ENCODE measurements at regions of chr22 and their contacts with region 1.

Region 1: GRCh38 chr22:39003165-39003638 is 10.9 kb upstream of the APOBEC3C start:
- DNase-seq: peak; percentile 84
- ATAC-seq: peak; percentile 93
- H3K4me3 ChIP-seq: no peak overlapping the region
- H3K4me3 Mint-ChIP-seq: no peak overlapping the region
- H3K27ac ChIP-seq: no peak overlapping the region
- H3K27ac Mint-ChIP-seq: peak overlapping the region; percentile 27
- H3K4me1 ChIP-seq: peaks cover 7 to 12% of the 10 kb centered on the region in 2 donors
- H3K4me1 Mint-ChIP-seq: peaks cover 13% of the 10 kb centered on the region
- H3K27me3 ChIP-seq: no peaks in the 10 kb centered on the region
- H3K27me3 Mint-ChIP-seq: peaks cover 2% of the 10 kb centered on the region
- CTCF ChIP-seq: peak; percentile 80

Region 2: GRCh38 chr22:38901111-38901641 is 102.0 kb before region 1 on chr22:
- CTCF ChIA-PET with region 1: no interaction called
- POLR2A ChIA-PET with region 1: no interaction called
- intact Hi-C with region 1: no loop called
- DNase-seq: no peak
- ATAC-seq: no peak
- H3K4me3 ChIP-seq: no peak overlapping the region
- H3K4me3 Mint-ChIP-seq: peak overlapping the region; percentile 51
- H3K27ac ChIP-seq: no peak overlapping the region
- H3K27ac Mint-ChIP-seq: no peak overlapping the region
- H3K4me1 ChIP-seq: peaks cover 0 to 16% of the 10 kb centered on the region in 2 donors
- H3K4me1 Mint-ChIP-seq: peaks cover 14% of the 10 kb centered on the region
- H3K27me3 ChIP-seq: no peaks in the 10 kb centered on the region
- H3K27me3 Mint-ChIP-seq: peaks cover 6% of the 10 kb centered on the region
- CTCF ChIP-seq: no peak

Region 3: DNA sequence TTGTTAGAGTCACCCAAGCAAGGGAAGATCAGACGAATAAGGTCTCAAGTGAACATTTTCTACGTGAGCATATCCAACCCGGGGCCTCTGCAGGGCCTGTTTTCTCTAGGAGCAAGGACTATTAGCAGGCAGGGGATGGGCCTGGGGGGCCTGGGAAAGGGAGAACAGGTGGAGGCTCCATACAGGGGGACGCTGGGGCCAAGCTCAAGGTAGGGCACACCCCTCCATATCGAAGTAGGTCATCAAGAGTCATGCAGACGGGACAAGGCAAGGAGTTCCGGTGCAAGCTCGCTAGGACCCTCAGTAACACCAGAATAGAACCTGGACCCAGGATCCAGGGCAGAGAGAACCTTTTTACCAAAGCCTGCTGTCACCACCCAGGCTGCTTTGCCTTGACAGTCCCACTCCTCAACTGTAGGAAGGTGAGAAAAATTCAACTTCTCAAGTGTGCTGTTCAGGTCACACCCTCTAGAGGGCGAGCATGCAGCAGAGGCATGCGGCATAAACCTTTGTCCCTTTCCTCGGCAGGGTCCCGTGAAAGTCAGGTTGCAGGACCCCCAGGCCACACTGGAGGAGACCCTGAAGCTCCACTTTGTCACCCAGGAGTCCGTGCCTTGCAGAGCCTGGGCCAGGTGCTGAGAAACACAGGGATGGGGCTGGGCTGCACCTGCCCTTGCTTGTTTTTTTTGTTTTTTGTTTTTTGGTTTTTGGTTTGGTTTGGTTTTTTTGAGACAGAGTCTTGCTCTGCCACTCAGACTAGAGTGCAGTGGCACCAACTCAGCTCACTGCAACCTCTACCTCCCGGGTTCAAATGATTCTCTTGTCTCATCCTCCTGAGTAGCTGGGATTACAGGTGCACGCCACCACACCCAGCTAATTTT is 29.7 kb before region 1 on chr22:
- CTCF ChIA-PET with region 1: interaction called, 133 read pairs
- POLR2A ChIA-PET with region 1: no interaction called
- intact Hi-C with region 1: loop called (anchors 1 kb)
- DNase-seq: peak; percentile 71
- ATAC-seq: peak; percentile 89
- H3K4me3 ChIP-seq: no peak overlapping the region
- H3K4me3 Mint-ChIP-seq: no peak overlapping the region
- H3K27ac ChIP-seq: no peak overlapping the region
- H3K27ac Mint-ChIP-seq: no peak overlapping the region
- H3K4me1 ChIP-seq: peaks cover 0 to 8% of the 10 kb centered on the region in 2 donors
- H3K4me1 Mint-ChIP-seq: peaks cover 6% of the 10 kb centered on the region
- H3K27me3 ChIP-seq: peaks cover 0 to 20% (median 0%) of the 10 kb centered on the region in 4 experiments
- H3K27me3 Mint-ChIP-seq: peaks cover 24% of the 10 kb centered on the region
- CTCF ChIP-seq: peak; percentile 92

Region 4: DNA sequence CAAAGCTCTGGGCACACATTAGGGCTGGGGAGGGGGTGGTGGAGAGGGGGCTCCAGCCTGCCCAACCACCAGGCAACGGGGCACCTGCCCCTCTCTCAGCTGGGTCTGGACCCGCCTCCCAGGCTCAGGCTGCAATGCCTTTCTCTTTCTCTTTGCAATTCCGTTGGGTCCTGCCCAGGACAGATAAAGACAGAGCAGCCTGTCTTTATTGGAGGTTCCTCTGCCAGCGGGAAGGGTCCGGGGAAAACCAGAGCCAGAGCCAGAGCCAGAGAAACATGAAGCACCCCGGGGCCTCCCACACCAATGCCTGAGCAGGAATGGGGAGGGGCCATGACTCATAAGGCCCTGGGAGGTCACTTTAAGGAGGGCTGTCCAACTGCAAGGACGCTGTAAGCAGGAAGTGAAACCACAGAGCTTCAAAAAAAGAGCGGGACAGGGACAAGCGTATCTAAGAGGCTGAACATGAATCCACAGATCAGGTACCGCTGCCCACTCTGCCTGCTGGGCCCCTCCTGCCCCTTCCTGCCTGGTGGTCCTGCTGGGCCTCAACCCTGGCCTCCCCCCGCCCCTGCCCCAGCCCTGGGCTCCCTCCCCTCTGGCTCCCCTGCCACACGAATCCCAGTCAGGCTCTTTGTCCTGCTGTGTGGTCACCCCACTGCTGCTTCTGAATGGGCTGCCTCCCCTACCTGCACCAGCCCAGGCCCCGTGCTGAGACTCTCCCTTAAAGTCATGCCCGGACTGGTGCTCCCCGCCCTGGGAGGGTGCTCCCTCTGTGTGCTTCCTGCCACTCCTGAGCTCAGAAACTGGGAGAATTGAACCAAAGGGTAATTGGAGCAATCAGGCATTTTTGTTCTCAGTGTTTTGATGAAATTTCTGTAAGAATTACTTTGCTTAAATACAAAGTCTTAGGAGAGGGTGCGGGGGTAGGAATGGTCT is 20.9 kb before region 1 on chr22 and contains the start of gene APOBEC3B:
- CTCF ChIA-PET with region 1: interaction called, 65 read pairs
- POLR2A ChIA-PET with region 1: interaction called, 8 read pairs
- intact Hi-C with region 1: loop called (anchors 1 kb)
- DNase-seq: peak; percentile 85
- ATAC-seq: peak; percentile 75
- H3K4me3 ChIP-seq: peak within 1 kb of the TSS in 4 of 5 experiments; percentile 43 to 74 (median 58)
- H3K4me3 Mint-ChIP-seq: peak within 1 kb of the TSS; percentile 97
- H3K27ac ChIP-seq: peak within 1 kb of the TSS in 1 of 2 donors; percentile 57
- H3K27ac Mint-ChIP-seq: peak within 1 kb of the TSS; percentile 92
- H3K4me1 ChIP-seq: peaks cover 11 to 39% of the 10 kb centered on the region in 2 donors
- H3K4me1 Mint-ChIP-seq: peaks cover 44% of the 10 kb centered on the region
- H3K27me3 ChIP-seq: no peaks in the 10 kb centered on the region
- H3K27me3 Mint-ChIP-seq: peaks cover under 1% of the 10 kb centered on the region
- CTCF ChIP-seq: no peak
- total RNA-seq, gene APOBEC3B: 7.9 and 9.8 TPM in 2 replicates

Region 5: GRCh38 chr22:39110631-39111561 is 107.7 kb after region 1 on chr22:
- CTCF ChIA-PET with region 1: interaction called, 12 read pairs
- POLR2A ChIA-PET with region 1: interaction called, 5 read pairs
- intact Hi-C with region 1: no loop called
- DNase-seq: peak; percentile 62
- ATAC-seq: peak; percentile 50
- H3K4me3 ChIP-seq: no peak overlapping the region
- H3K4me3 Mint-ChIP-seq: no peak overlapping the region
- H3K27ac ChIP-seq: peak overlapping the region; percentile 11 to 30
- H3K27ac Mint-ChIP-seq: peak overlapping the region; percentile 39
- H3K4me1 ChIP-seq: peaks cover 29 to 34% of the 10 kb centered on the region in 2 donors
- H3K4me1 Mint-ChIP-seq: peaks cover 39% of the 10 kb centered on the region
- H3K27me3 ChIP-seq: no peaks in the 10 kb centered on the region
- H3K27me3 Mint-ChIP-seq: no peaks in the 10 kb centered on the region
- CTCF ChIP-seq: no peak

Region 6: GRCh38 chr22:39117585-39118191 is 114.5 kb after region 1 on chr22:
- CTCF ChIA-PET with region 1: interaction called, 150 read pairs
- POLR2A ChIA-PET with region 1: interaction called, 5 read pairs
- intact Hi-C with region 1: loop called (anchors 1 kb)
- DNase-seq: peak; percentile 83
- ATAC-seq: peak; percentile 56
- H3K4me3 ChIP-seq: no peak overlapping the region
- H3K4me3 Mint-ChIP-seq: peak overlapping the region; percentile 61
- H3K27ac ChIP-seq: peak overlapping the region; percentile 1 to 11
- H3K27ac Mint-ChIP-seq: peak overlapping the region; percentile 68
- H3K4me1 ChIP-seq: peaks cover 40 to 43% of the 10 kb centered on the region in 2 donors
- H3K4me1 Mint-ChIP-seq: peaks cover 46% of the 10 kb centered on the region
- H3K27me3 ChIP-seq: no peaks in the 10 kb centered on the region
- H3K27me3 Mint-ChIP-seq: no peaks in the 10 kb centered on the region
- CTCF ChIP-seq: peak; percentile 78

Region 7: GRCh38 chr22:39122786-39123475 is 119.7 kb after region 1 on chr22:
- CTCF ChIA-PET with region 1: interaction called, 150 read pairs
- POLR2A ChIA-PET with region 1: no interaction called
- intact Hi-C with region 1: loop called (anchors 1 kb)
- DNase-seq: no peak
- ATAC-seq: no peak
- H3K4me3 ChIP-seq: no peak overlapping the region
- H3K4me3 Mint-ChIP-seq: no peak overlapping the region
- H3K27ac ChIP-seq: no peak overlapping the region
- H3K27ac Mint-ChIP-seq: no peak overlapping the region
- H3K4me1 ChIP-seq: peaks cover 5 to 12% of the 10 kb centered on the region in 2 donors
- H3K4me1 Mint-ChIP-seq: peaks cover 16% of the 10 kb centered on the region
- H3K27me3 ChIP-seq: no peaks in the 10 kb centered on the region
- H3K27me3 Mint-ChIP-seq: no peaks in the 10 kb centered on the region
- CTCF ChIP-seq: no peak

Region 8: GRCh38 chr22:39382414-39382813 is 379.2 kb after region 1 on chr22:
- CTCF ChIA-PET with region 1: no interaction called
- POLR2A ChIA-PET with region 1: no interaction called
- intact Hi-C with region 1: no loop called
- DNase-seq: no peak
- ATAC-seq: no peak
- H3K4me3 ChIP-seq: no peak overlapping the region
- H3K4me3 Mint-ChIP-seq: no peak overlapping the region
- H3K27ac ChIP-seq: no peak overlapping the region
- H3K27ac Mint-ChIP-seq: peak overlapping the region; percentile 50
- H3K4me1 ChIP-seq: peaks cover 0 to 8% of the 10 kb centered on the region in 2 donors
- H3K4me1 Mint-ChIP-seq: peaks cover 16% of the 10 kb centered on the region
- H3K27me3 ChIP-seq: no peaks in the 10 kb centered on the region
- H3K27me3 Mint-ChIP-seq: no peaks in the 10 kb centered on the region
- CTCF ChIP-seq: no peak

Region 9: GRCh38 chr22:39446295-39446721 is 443.1 kb after region 1 on chr22:
- CTCF ChIA-PET with region 1: no interaction called
- POLR2A ChIA-PET with region 1: no interaction called
- intact Hi-C with region 1: no loop called
- DNase-seq: no peak
- ATAC-seq: peak; percentile 48
- H3K4me3 ChIP-seq: peak overlapping the region in 3 of 5 experiments; percentile 1 to 67 (median 54)
- H3K4me3 Mint-ChIP-seq: peak overlapping the region; percentile 90
- H3K27ac ChIP-seq: peak overlapping the region; percentile 60 to 89
- H3K27ac Mint-ChIP-seq: peak overlapping the region; percentile 95
- H3K4me1 ChIP-seq: peaks cover 69 to 81% of the 10 kb centered on the region in 2 donors
- H3K4me1 Mint-ChIP-seq: peaks cover 77% of the 10 kb centered on the region
- H3K27me3 ChIP-seq: no peaks in the 10 kb centered on the region
- H3K27me3 Mint-ChIP-seq: no peaks in the 10 kb centered on the region
- CTCF ChIP-seq: no peak

Measured in B cell (primary cell).